Esophagus muscularis mucosa (tissue), 4 donors: ENCODE measurements at regions of chr1 and their contacts with region 1.

Region 1: GRCh38 chr1:95233737-95234500 is at the start of gene RWDD3:
- DNase-seq: peak; percentile 95
- H3K4me3 ChIP-seq: peak within 1 kb of the TSS; percentile 72 to 95 (median 84)
- H3K27ac ChIP-seq: peak within 1 kb of the TSS; percentile 82 to 92 (median 88)
- H3K4me1 ChIP-seq: peaks cover 27 to 58% (median 50%) of the 10 kb centered on the region in 4 donors
- H3K27me3 ChIP-seq: no peaks in the 10 kb centered on the region
- CTCF ChIP-seq: peak in 2 of 3 experiments; percentile 95
- EP300 ChIP-seq: no peak
- POLR2A ChIP-seq: peak; percentile 3
- total RNA-seq, gene RWDD3: 8.8 to 15.2 (median 11.6) TPM

Region 2: DNA sequence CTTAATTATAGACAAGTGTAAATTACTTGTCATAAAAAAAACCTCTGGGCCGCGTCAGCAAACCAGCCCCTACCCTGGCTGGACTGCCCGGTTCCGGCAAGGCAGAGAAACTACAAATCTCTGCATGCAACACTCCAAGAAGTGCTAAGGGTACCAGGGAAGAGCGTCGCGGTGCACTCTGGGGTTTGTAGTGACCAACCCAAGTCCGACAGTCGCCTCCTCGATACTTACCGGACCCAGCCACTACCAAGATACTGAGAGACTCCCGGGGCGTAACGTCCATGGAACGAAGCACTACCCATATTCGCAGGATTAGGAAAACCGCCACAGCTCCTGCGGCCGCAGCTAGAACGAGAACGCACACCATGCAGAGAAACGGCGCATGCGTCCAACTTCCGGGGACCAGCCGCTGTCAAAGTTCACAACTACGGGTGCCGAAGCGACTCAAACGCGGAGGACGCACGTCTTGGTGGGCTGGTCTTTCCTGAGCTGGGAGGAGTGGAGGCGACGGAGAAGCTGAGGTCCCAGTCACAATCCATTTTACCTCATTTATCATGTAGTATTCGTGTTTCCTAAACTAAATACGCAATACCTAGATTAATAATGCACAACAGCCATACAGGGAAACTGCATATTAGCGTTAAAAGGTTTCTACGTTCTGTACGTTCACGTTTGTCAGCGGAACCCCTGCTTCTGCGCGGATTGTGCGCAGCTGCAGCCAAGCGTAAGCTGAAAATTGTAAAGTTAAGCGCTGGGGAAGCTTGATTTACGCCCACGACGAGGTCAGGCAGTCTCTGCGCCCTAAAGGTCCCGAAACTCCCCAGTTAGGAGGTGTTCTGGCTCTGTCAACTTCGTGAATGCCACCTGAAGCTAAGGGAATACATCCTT is 161.1 kb before region 1 on chr1 and contains the start of gene ALG14:
- intact Hi-C with region 1: loop called (anchors 5 kb)
- DNase-seq: peak; percentile 99
- H3K4me3 ChIP-seq: peak within 1 kb of the TSS; percentile 75 to 80 (median 76)
- H3K27ac ChIP-seq: peak within 1 kb of the TSS; percentile 89 to 92 (median 90)
- H3K4me1 ChIP-seq: peaks cover 3 to 22% (median 13%) of the 10 kb centered on the region in 4 donors
- H3K27me3 ChIP-seq: no peaks in the 10 kb centered on the region
- CTCF ChIP-seq: no peak
- EP300 ChIP-seq: no peak
- POLR2A ChIP-seq: no peak
- total RNA-seq, gene ALG14: 0.52 to 0.83 (median 0.74) TPM

Region 3: DNA sequence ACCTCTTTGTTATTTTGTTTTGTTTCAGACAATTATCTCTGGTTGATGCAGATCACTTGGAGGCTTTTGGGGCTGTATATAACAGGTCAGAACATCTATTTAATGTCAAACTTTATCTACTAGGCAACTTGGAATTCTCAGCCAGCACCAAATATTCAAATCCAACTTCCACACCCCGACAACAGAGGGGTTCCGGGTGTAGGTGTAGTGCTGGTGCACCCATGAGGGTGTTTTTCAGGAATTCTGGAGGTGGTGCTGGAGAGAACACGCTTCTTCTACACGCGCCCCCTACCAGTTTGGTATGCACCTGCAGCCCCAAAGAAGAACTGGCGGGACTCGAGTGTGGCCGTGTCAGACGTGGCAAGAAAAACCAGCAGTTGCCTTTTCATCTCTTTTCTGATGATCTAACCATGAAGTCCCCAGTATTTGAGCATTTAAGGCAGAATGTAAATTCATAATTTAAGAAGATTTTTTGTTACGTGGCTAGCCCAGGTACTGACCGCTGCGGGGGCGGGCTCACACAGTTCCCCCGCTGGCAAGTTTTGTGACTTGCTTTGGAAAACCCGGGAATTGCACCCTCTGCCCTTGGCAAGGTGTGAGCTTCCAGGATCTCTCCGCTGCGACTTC is 117.2 kb before region 1 on chr1:
- intact Hi-C with region 1: loop called (anchors 2 kb)
- DNase-seq: no peak
- H3K4me3 ChIP-seq: peak overlapping the region; percentile 82 to 92 (median 85)
- H3K27ac ChIP-seq: peak overlapping the region; percentile 71 to 83 (median 77)
- H3K4me1 ChIP-seq: peaks cover 6 to 31% (median 23%) of the 10 kb centered on the region in 4 donors
- H3K27me3 ChIP-seq: no peaks in the 10 kb centered on the region
- CTCF ChIP-seq: peak; percentile 38 to 63 (median 63)
- EP300 ChIP-seq: no peak
- POLR2A ChIP-seq: no peak

Region 4: DNA sequence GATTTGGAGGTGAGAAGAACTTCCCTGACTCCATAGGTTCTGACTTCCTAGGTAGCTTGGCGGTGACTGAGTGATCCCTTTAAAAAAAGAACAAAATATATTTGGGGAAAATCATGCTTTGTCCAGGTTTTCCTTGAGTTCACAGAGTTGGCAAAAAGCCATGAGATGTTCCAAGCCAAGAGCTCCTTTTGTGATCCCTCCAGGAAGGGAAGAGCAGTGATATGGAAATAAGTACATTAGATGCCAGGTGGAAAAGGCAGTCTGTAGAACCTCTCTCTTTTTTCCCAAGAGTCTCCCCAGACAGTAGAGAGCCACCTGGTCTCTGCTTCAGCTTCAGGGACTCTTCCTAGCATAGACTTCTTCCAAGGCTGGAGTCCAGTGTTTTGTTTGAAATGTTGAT is 106.5 kb before region 1 on chr1:
- intact Hi-C with region 1: no loop called
- DNase-seq: no peak
- H3K4me3 ChIP-seq: no peak overlapping the region
- H3K27ac ChIP-seq: no peak overlapping the region
- H3K4me1 ChIP-seq: no peaks in the 10 kb centered on the region
- H3K27me3 ChIP-seq: no peaks in the 10 kb centered on the region
- CTCF ChIP-seq: no peak
- EP300 ChIP-seq: no peak
- POLR2A ChIP-seq: no peak

Region 5: DNA sequence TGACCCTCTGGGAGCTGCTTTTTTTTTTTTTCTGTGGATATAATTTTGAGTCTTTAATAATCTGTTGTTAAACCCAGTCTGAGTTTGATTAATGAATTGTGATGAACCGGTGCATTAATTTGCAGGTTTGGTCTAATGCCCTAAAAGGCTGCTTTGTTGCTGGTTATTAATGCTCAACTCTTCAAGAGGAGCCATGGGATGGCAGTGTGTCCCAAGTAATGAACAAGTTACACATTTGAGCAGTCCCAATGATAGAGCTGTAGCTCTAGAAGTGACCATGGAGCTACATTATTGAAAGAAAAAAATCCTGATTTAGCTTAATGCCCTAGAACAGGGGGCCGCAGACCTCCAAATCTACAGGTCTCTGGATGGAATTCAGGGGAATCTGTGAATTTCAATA is 53.2 kb after region 1 on chr1:
- intact Hi-C with region 1: no loop called
- DNase-seq: no peak
- H3K4me3 ChIP-seq: no peak overlapping the region
- H3K27ac ChIP-seq: no peak overlapping the region
- H3K4me1 ChIP-seq: no peaks in the 10 kb centered on the region
- H3K27me3 ChIP-seq: no peaks in the 10 kb centered on the region
- CTCF ChIP-seq: no peak
- EP300 ChIP-seq: no peak
- POLR2A ChIP-seq: no peak